ENCODE measurements at regions of chr1 and their contacts with region 1.

Region 1: DNA sequence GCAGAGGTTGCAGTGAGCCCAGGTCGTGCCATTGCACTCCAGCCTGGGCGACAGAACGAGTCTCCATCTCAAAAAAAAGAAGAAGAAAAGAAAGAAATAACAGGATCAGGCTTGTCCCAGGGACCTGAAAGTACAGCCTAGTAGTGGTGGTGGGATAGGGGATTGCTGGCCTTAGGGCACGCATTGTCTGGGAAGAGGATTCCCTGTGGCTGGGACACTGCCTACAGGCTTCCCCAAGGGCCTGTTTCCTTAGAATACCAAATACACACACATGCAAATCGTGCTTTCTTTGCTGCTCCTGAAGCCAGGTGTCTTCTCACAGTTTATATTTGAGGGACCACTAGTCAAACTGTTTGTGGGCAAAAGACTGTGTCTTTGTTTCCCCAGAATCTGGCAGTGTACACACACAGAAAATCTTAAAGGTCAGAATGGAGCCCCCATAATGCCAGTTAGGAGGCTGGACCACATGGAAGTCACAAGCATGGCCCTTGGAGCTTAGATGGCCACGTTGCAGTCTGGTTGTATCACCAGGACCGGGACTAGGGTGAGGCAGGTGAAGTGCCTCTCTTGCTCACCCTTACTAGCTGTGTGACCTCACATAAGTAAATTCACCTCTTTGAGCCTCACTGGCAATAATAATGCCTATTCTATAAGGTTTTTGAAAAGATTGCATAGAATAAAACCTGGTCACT is 12.7 kb upstream of the ASAP3 start:
- DNase-seq: no peak
- H3K27ac ChIP-seq: no peak overlapping the region
- CTCF ChIP-seq: no peak

Region 2: DNA sequence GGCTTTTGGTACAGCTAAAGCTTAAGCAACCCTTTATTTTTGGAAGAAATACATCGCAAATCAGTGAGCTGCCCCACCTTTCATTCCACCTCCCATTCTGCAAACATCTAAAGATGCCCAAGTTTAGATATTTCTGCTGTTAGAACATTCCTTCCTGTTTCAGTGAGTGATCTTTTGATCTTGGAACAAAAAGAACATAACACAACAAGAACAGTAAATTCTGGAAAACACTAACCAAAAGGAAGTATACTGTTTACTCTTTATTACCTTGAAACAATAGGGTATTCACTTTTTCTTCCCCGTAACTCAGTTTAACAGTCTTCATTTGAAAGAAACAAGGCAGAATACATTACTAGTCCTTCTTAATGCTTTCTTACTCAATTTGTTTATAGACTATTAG is 193.1 kb before region 1 on chr1:
- CTCF ChIA-PET with region 1: interaction called, 12 read pairs
- POLR2A ChIA-PET with region 1: no interaction called
- DNase-seq: no peak
- H3K27ac ChIP-seq: no peak overlapping the region
- CTCF ChIP-seq: no peak

Region 3: DNA sequence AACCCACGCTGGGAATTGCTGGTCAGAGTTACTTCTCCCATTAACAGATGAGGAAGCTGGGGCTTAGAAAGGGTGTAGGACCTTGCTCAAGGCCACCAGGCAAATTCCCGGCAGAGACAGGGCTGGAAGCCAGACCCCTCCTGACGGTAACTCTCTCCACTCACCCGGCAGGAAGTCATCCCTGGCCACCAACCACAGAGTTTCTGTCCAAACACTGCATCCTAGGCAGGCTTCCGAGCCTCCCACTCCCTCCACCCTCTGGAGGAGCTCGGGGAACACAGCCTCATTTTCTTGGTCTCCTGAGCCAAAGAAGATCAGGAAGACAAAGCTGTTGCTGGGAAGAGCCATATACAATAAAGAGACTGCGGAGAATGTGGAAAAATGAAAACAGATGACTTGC is 102.0 kb before region 1 on chr1:
- CTCF ChIA-PET with region 1: no interaction called
- POLR2A ChIA-PET with region 1: no interaction called
- DNase-seq: no peak
- H3K27ac ChIP-seq: peak overlapping the region; percentile 20; the same call in 1 of the 2 replicates
- CTCF ChIP-seq: no peak

Region 4: GRCh38 chr1:23507507-23507906 is 10.9 kb after region 1 on chr1:
- CTCF ChIA-PET with region 1: interaction called, 11 read pairs
- POLR2A ChIA-PET with region 1: no interaction called
- DNase-seq: no peak
- H3K27ac ChIP-seq: peak overlapping the region; percentile 10; the same call in 1 of the 2 replicates
- CTCF ChIP-seq: no peak

Region 5: GRCh38 chr1:23530747-23531561 is 34.3 kb after region 1 on chr1 and contains the start of gene E2F2:
- CTCF ChIA-PET with region 1: interaction called, 16 read pairs
- POLR2A ChIA-PET with region 1: no interaction called
- DNase-seq: peak; percentile 95
- H3K27ac ChIP-seq: peak within 1 kb of the TSS; percentile 89
- CTCF ChIP-seq: peak; percentile 16; the same call in 1 of the 2 replicates

Region 6: GRCh38 chr1:23539698-23540266 is 43.1 kb after region 1 on chr1:
- CTCF ChIA-PET with region 1: interaction called, 39 read pairs
- POLR2A ChIA-PET with region 1: interaction called, 3 read pairs
- DNase-seq: peak; percentile 89
- H3K27ac ChIP-seq: no peak overlapping the region
- CTCF ChIP-seq: peak; percentile 95

Region 7: DNA sequence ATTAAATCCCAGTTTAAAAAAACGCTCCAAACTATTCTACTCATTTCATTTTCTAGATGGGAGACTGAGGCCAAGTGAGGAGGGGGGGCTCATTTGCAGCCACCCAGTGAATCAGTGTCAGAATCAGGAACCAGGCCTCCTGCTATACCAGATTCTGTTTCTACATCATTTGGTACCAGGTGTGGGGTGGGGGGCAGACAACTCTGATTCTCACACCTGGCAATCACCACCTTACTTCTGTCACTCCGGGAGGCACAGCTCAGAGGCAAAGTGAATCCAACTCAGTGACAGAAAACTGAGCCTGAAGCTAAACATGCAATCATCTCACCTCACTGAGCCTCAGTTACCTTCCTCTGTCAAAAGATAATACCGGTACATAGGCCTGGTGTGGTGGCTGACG is 86.2 kb after region 1 on chr1:
- CTCF ChIA-PET with region 1: no interaction called
- POLR2A ChIA-PET with region 1: no interaction called
- DNase-seq: no peak
- H3K27ac ChIP-seq: peak overlapping the region; percentile 44
- CTCF ChIP-seq: no peak

Region 8: GRCh38 chr1:23593558-23594149 is 97.0 kb after region 1 on chr1:
- CTCF ChIA-PET with region 1: no interaction called
- POLR2A ChIA-PET with region 1: no interaction called
- DNase-seq: peak; percentile 94
- H3K27ac ChIP-seq: peak overlapping the region; percentile 95
- CTCF ChIP-seq: no peak

Region 9: GRCh38 chr1:23634842-23635651 is 138.4 kb after region 1 on chr1:
- CTCF ChIA-PET with region 1: interaction called, 12 read pairs
- POLR2A ChIA-PET with region 1: no interaction called
- DNase-seq: peak; percentile 88
- H3K27ac ChIP-seq: peak overlapping the region; percentile 35
- CTCF ChIP-seq: peak; percentile 89